A549 (cell line): ENCODE measurements at regions of chr16 and their contacts with region 1.

Region 1: DNA sequence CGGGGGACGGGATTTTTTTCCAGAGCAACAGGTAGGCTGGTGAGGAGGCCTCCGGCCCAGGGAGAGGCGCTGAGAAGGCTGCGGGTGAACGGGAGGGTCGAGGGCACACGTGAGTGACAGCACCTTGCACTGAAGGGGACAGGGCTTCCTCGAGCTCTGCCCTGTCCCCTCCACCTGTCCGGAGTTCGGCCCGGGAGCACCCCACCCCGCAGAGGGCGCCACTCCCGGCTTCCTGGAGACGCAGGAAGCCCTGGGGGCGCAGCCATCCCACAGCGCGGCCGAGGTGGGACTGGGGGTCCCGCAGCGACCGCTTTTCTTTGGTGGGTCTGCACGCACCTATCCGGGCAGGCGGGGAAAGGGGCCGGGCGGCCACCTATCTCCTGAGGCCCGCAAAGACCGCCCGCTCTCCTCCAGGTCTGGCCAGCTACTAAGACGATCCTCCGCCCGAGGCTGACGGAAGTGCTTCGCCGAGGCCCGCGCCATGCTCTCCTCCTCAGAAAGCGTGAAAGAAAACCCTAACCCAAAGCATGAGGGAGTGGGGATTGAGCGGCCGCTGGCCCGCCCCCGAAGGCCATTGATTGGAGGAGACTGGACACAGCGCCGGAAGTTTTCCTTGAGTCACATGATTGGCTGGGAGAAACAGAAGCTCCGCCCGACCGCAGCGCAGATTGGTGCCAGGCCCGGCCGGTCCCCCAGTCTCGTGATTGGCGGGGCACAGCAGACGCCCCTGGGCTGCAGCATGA is 34.3 kb downstream of the DDX19A start:
- DNase-seq: peak; percentile 92 to 97
- ATAC-seq: peak; percentile 84 to 94
- H3K4me3 ChIP-seq: peak overlapping the region; percentile 66
- H3K27ac ChIP-seq: peak overlapping the region; percentile 94 to 96
- H3K4me1 ChIP-seq: peaks cover 14% of the 10 kb centered on the region
- CTCF ChIP-seq: peak; percentile 40; the same call in 2 of the 3 replicates
- EP300 ChIP-seq: no peak
- POLR2A ChIP-seq: peak; percentile 84
- RAD21 ChIP-seq: peak; percentile 3 to 52; a peak in 3 of 5 replicates

Region 2: DNA sequence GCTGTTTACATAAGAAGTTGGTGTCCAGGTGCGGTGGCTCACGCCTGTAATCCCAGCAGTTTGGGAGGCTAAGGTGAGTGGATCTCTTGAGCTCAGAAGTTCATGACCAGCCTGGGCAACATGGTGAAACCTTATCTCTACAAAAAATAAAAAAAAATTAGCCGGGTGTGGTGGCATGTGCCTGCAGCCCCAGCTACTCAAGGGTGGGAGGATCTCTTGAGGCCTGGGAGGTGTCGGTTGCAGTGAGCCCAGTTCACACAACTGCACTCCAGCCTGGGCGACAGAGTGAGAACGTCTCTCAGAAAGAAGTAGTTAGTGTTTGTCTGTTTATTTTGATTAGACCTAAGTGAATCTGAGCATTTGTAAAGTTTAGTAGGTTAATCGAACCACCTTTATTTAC is 21.5 kb before region 1 on chr16:
- CTCF ChIA-PET with region 1: interaction called, 13 read pairs
- POLR2A ChIA-PET with region 1: interaction called, 4 read pairs
- DNase-seq: no peak
- ATAC-seq: no peak
- H3K4me3 ChIP-seq: no peak overlapping the region
- H3K27ac ChIP-seq: no peak overlapping the region
- H3K4me1 ChIP-seq: no peaks in the 10 kb centered on the region
- CTCF ChIP-seq: no peak
- EP300 ChIP-seq: no peak
- POLR2A ChIP-seq: no peak
- RAD21 ChIP-seq: no peak

Region 3: DNA sequence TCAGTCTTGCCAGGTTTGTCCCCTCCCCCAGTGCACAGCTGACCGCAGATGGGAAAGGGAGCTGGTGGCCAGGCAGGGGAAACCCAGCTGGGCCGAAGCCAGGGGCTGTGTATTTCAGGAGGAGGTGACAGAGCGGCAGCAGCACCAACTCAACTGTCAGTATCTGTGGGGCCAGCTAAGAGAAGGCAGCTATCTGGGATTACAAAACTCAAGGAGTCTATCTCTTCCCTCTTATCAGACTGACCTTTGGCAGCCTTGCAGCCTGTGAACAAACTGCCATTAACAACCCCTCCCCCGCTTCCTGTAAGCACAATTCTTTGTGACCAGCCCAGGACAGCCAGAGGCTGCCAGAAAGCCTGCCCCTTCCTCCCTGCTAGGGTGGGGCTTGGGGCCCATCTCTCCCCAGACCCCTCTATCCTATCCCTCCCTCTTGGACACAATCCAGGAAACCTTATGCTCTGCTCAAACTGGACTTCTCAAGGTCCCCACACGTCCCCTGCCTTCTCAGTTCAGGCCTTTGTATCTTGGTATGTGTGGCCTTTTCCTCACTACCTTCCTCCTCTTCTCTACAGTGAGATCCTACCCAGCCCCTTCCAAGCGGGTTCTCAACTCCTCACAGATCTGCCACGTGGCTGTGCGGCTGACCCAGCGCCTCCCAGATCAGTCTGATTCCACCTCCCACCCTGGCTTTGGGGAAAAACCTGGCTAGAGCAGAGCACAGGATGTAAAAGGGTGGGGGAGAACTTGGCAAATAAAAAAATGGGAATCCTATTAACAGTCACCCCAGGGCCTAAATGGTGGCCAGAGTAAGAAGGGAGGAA is 47.4 kb after region 1 on chr16:
- CTCF ChIA-PET with region 1: interaction called, 3 read pairs
- POLR2A ChIA-PET with region 1: interaction called, 29 read pairs
- DNase-seq: peak; percentile 94 to 96
- ATAC-seq: peak; percentile 87 to 88
- H3K4me3 ChIP-seq: no peak overlapping the region
- H3K27ac ChIP-seq: peak overlapping the region; percentile 93 to 95
- H3K4me1 ChIP-seq: peaks cover 65% of the 10 kb centered on the region
- CTCF ChIP-seq: no peak
- EP300 ChIP-seq: peak in 1 of 2 experiments; percentile 65; a peak in 2 of 5 replicates
- POLR2A ChIP-seq: no peak; the same call in 1 of the 2 replicates
- RAD21 ChIP-seq: peak; percentile 28 to 42; a peak in 4 of 5 replicates

Region 4: DNA sequence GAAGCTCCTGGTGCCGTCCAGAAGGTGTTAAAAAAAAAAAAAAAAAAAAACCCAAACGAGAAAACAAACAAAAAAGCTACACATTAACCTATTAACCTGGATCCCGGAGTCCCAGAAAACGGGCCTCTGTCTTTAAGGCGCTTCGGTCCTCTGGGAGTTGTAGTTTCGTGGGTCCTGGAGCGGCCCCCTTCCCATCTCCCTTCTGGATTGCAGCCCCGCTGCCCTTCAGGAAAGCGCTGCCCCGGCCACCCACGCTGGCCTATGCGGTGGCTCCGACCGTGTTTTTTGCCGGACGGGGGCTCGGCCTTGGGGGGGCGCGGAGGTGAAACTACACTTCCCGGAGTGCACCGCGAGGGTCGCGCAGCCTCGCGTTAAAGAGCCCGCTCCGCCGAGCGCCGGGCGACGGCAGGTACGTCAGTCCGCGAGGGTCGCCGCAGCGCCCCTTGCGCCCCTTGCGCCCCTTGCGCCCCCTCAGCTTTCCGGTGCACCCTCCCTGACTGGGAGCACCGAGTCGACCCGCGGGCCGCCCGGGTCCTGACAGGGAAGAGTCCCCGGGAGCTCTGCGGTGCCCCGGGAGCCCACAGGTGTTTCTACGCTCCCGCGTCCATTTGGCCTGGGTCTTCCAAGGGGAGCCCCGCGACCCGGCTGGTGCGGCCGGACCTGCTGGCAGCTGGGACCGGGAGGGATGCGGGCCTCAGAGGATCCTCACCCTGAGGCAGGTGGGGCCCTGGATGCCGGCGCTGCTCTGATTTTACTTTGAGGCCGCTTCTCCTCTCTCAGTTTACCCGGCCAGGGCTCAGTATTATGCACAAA is 73.4 kb after region 1 on chr16 and contains the start of gene FCSK:
- CTCF ChIA-PET with region 1: interaction called, 14 read pairs
- POLR2A ChIA-PET with region 1: interaction called, 27 read pairs
- DNase-seq: peak; percentile 75 to 94
- ATAC-seq: peak; percentile 94 to 96
- H3K4me3 ChIP-seq: peak within 1 kb of the TSS; percentile 80
- H3K27ac ChIP-seq: peak within 1 kb of the TSS; percentile 96 to 97
- H3K4me1 ChIP-seq: peaks cover 12% of the 10 kb centered on the region; the same call in 2 of the 3 replicates
- CTCF ChIP-seq: peak; percentile 13; the same call in 1 of the 3 replicates
- EP300 ChIP-seq: no peak
- POLR2A ChIP-seq: peak; percentile 48
- RAD21 ChIP-seq: 0 out of 5 replicates have a peak, but pooled peaks of 1 of the 2 experiments have one; percentile 29
- polyA plus RNA-seq, gene FCSK: 5.7 and 9.3 TPM in 2 replicates

Region 5: GRCh38 chr16:70523076-70523742 is 142.2 kb after region 1 on chr16 and contains the start of gene COG4:
- CTCF ChIA-PET with region 1: no interaction called
- POLR2A ChIA-PET with region 1: interaction called, 18 read pairs
- DNase-seq: peak; percentile 88
- ATAC-seq: peak; percentile 90 to 91
- H3K4me3 ChIP-seq: peak within 1 kb of the TSS; percentile 75
- H3K27ac ChIP-seq: peak within 1 kb of the TSS; percentile 86 to 93
- H3K4me1 ChIP-seq: peaks cover 37% of the 10 kb centered on the region
- CTCF ChIP-seq: no peak
- EP300 ChIP-seq: no peak
- POLR2A ChIP-seq: peak; percentile 77
- RAD21 ChIP-seq: no peak
- polyA plus RNA-seq, gene COG4: 48.2 and 53.1 TPM in 2 replicates

Region 6: DNA sequence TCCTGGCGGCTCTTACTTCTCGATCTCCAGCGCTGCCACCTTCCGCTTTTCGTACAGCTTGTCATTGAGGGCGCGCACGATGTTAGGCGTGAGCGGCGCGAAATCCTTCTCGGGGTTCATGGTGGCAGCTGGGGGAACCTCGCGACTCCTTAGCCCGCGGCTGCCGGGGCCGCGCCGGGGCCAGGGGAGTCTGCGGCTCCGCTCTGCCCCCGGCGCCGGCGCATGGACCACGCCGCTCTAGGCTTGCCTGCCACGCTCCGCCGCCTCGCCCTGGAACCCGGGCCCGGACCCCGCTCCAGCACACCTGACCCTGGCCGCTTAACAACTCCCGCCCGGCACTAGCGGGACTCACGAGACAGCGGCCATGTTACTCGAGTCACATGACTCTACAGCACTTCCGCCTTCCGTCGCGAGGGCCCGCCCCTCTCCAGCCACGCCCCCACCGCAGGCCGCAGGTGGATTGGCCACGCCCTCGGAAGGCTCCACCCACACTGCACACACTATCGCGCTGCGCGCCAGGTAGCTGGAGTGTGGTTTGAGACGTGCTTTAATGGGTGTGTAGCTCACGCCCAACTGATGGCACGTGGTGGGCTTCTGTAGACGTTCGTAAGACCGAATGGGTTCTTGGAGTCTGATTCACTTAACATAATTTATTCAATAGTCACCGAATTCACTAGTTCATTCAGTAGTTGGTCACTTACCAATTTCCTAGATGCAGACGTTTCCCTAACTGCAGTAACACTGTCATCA is 419.9 kb after region 1 on chr16 and contains the start of gene VAC14:
- CTCF ChIA-PET with region 1: no interaction called
- POLR2A ChIA-PET with region 1: no interaction called
- DNase-seq: peak; percentile 89 to 92
- ATAC-seq: peak; percentile 89 to 96
- H3K4me3 ChIP-seq: peak within 1 kb of the TSS; percentile 80
- H3K27ac ChIP-seq: peak within 1 kb of the TSS; percentile 77 to 91
- H3K4me1 ChIP-seq: peaks cover 10% of the 10 kb centered on the region; the same call in 2 of the 3 replicates
- CTCF ChIP-seq: no peak
- EP300 ChIP-seq: no peak
- POLR2A ChIP-seq: peak; percentile 84
- RAD21 ChIP-seq: no peak
- polyA plus RNA-seq, gene VAC14: 27.0 and 32.0 TPM in 2 replicates